ENCODE measurements at regions of chr3 and their contacts with region 1.

Region 1: DNA sequence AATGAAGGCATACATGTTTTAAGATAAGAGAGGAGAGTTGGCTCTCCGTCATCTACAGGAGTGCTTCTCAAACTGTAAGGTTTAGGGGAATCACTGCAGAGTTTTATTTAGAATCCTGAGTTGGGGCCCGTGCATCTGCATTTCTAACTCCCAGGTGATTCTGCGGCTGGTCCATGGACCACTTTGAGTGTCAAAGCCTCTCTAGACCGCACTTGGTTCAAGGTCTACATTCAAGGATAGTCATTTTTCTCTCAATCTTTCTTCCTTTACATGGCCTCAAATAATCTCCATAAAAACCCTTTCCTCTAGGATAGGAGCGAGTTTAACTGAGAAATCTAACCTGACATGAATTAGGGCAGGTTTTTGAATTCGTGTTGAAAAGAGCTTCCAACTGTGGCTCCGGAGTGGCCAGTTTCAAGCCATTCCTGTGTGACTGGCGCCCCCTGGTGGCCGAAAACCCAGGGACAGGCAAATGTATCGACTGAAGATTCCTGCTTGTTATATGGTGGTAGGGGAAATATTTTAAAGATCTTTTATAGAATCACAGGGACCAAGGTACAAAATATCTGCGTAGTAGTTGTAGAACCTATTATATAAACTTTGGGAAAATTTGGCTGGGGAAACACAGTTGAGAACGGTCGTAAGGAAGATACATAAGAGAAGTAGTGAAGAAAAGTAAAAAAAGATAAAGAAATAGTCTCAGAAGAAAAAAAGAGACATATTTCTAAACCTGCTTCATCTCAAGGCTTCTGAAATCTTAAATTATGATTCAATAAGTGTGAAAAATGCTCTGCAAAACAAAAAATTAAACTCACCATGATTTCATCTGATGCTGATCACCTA is 11.9 kb downstream of the GABRR3 start:
- DNase-seq: peak; percentile 93
- ATAC-seq: peak; percentile 89
- H3K4me3 Mint-ChIP-seq: no peak overlapping the region
- H3K27ac Mint-ChIP-seq: peak overlapping the region; percentile 2
- H3K4me1 Mint-ChIP-seq: peaks cover 15% of the 10 kb centered on the region
- H3K27me3 Mint-ChIP-seq: no peaks in the 10 kb centered on the region

Region 2: DNA sequence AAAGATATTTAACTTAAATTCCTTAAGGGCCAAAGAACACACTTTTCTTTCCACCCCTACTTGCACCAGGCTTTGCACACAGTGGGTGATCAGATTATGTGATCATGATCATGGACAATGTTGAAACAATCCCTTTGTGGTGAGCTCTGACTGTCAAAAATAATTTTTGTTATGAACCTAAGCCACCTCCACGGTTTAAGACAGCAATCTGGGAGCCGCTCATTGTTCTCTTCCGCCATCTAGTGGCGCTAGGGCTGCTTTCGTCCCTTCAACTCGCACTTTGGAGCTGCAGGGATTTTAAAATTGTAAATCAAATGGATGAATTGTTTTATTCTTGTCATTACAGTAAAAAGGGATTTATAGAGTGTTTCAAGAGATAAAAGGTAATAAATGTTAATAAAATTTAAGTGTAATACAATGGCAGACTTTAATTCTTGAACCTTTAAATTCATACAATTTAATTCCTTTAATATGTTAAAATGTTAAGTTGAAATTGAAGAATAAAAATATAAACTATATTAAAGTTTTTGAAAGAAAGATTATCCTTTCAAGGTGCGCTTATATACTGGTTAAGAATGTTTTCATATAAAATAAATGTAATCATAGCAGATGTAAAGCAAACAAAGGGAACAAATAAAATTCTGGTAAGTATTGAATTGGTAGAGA is 303.9 kb before region 1 on chr3:
- CTCF ChIA-PET with region 1: interaction called, 12 read pairs
- DNase-seq: peak; percentile 72
- ATAC-seq: peak; percentile 76
- H3K4me3 Mint-ChIP-seq: no peak overlapping the region
- H3K27ac Mint-ChIP-seq: no peak overlapping the region
- H3K4me1 Mint-ChIP-seq: no peaks in the 10 kb centered on the region
- H3K27me3 Mint-ChIP-seq: peaks cover 2% of the 10 kb centered on the region

Region 3: GRCh38 chr3:97793420-97794019 is 229.7 kb before region 1 on chr3:
- CTCF ChIA-PET with region 1: interaction called, 33 read pairs
- DNase-seq: no peak
- ATAC-seq: peak; percentile 49
- H3K4me3 Mint-ChIP-seq: no peak overlapping the region
- H3K27ac Mint-ChIP-seq: no peak overlapping the region
- H3K4me1 Mint-ChIP-seq: peaks cover 4% of the 10 kb centered on the region
- H3K27me3 Mint-ChIP-seq: no peaks in the 10 kb centered on the region

Region 4: DNA sequence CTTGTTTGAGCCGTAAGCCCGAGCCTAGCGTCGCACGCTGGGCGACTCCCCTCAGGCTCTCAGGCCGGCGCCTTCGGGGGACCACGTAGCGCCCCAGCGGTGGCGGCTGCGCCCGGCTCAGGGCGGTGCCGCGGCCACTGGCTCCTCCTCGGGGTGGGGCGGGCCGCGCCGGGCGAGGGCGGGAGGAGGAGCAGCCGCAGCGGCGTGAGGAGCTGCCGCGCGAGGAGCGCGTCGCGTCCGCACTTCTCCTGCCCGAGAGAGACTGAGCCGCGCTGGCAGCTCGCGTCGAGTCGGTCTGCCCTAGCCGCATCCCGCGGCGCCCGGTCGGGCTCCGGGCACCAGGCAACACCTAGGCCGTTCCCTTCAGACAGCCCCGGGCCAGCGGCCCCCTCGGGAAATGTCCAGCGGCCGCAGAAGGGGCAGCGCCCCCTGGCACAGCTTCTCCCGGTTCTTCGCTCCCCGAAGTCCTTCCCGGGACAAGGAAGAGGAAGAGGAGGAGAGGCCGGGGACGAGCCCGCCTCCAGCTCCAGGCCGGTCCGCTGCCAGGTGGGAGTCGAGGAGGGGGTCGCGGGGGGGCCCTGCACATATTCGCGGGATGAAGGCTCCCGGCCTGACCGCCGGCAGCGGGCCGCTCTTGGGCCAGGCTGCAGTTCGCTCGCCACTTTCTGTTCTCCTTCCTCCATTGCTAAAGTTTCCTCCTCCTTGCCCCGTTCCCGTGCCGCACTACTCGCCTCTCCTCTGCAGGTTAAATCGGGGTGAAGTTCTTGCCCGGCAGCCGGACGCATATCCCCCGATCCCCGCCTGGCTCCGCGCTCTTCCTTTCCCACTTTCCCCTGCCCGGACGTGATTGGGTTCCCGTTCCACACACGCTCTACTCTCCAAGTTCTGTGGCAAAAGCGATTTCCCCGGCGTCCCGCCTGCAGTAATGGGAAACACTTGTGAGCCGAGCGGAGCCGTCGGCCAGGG is 201.1 kb before region 1 on chr3 and contains the start of gene CRYBG3:
- CTCF ChIA-PET with region 1: interaction called, 14 read pairs
- DNase-seq: peak; percentile 90
- ATAC-seq: peak; percentile 98
- H3K4me3 Mint-ChIP-seq: peak within 1 kb of the TSS; percentile 98
- H3K27ac Mint-ChIP-seq: peak within 1 kb of the TSS; percentile 84
- H3K4me1 Mint-ChIP-seq: peaks cover 30% of the 10 kb centered on the region
- H3K27me3 Mint-ChIP-seq: peaks cover 18% of the 10 kb centered on the region
- total RNA-seq, gene CRYBG3: 5.9 to 6.1 TPM

Region 5: GRCh38 chr3:98039322-98040024 is 16.3 kb after region 1 on chr3:
- CTCF ChIA-PET with region 1: interaction called, 18 read pairs
- DNase-seq: peak; percentile 88
- ATAC-seq: peak; percentile 97
- H3K4me3 Mint-ChIP-seq: peak overlapping the region; percentile 84
- H3K27ac Mint-ChIP-seq: peak overlapping the region; percentile 96
- H3K4me1 Mint-ChIP-seq: peaks cover 27% of the 10 kb centered on the region
- H3K27me3 Mint-ChIP-seq: peaks cover 25% of the 10 kb centered on the region